ENCODE measurements at regions of chr2 and their contacts with region 1.

Region 1: DNA sequence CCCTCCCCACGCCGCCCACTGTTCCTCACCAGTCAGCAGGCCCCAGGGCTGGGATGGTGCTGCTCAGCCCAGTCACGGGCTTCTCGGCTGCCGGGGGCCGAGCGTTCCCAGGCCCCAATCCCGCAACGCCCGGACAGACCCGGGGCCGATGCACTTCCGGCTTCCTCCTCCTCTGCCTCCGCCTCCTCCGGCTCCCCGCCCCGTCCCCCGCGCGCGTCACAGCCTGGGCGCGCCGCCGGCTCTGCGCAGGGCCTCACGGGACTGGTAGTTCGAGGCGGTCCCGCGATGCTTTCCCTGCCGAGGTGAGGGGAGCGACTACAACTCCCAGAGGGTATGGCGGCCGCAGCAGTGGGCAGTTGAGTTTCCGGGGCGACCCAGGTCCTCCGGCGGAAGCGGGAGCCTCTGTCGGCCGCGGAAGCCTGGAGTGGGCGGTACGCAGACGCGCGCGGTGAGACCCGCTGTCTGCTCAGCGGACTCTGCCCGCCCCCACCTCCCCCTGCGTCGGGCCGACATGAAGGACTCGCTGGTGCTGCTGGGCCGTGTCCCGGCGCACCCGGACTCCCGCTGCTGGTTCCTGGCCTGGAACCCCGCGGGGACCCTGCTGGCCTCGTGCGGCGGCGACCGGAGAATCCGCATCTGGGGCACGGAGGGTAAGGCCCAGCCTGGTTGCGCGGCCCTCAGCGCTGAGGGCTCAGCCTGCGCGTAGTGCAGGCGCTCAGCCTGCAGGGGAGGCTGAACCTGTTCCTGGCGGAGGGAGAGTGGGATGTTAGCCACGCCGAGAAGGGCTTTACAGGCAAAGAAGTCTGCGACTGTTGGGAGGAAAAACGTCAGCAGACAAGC is at the starts of genes CIAO1 and TMEM127:
- DNase-seq: peak; percentile 96 to 100 (median 99)
- H3K4me3 ChIP-seq: peak within 1 kb of the TSS; percentile 75 to 100 (median 94)
- H3K27ac ChIP-seq: peak within 1 kb of the TSS in 58 of 59 donors; percentile 55 to 96 (median 87)
- H3K27me3 ChIP-seq: no peaks in the 10 kb centered on the region
- CTCF ChIP-seq: peak in 48 of 56 donors; percentile 1 to 68 (median 42)
- total RNA-seq, gene CIAO1: 71.3 to 116 (median 96.1) TPM
- total RNA-seq, gene TMEM127: 33.5 to 77.9 (median 59.2) TPM

Region 2: GRCh38 chr2:96024336-96025193 is 241.5 kb before region 1 on chr2:
- intact Hi-C with region 1: loop called in 1 of 2 experiments (anchors 10 kb)
- DNase-seq: peak in 5 of 10 donors; percentile 45 to 72 (median 55)
- H3K4me3 ChIP-seq: no peak overlapping the region
- H3K27ac ChIP-seq: peak overlapping the region in 57 of 59 donors; percentile 25 to 86 (median 69)
- H3K27me3 ChIP-seq: no peaks in the 10 kb centered on the region
- CTCF ChIP-seq: peak in 1 of 56 donors; percentile 5

Region 3: GRCh38 chr2:96145036-96145847 is 120.8 kb before region 1 on chr2 and contains the start of gene DUSP2:
- intact Hi-C with region 1: loop called (anchors 5 to 10 kb)
- DNase-seq: peak in 8 of 10 donors; percentile 43 to 80 (median 59)
- H3K4me3 ChIP-seq: peak within 1 kb of the TSS; percentile 36 to 77 (median 64)
- H3K27ac ChIP-seq: peak within 1 kb of the TSS in 53 of 59 donors; percentile 3 to 84 (median 66)
- H3K27me3 ChIP-seq: no peaks in the 10 kb centered on the region
- CTCF ChIP-seq: peak in 13 of 56 donors; percentile 10 to 29 (median 21)
- total RNA-seq, gene DUSP2: 2.9 to 109 (median 7.5) TPM

Region 4: GRCh38 chr2:96208143-96209010 is 57.7 kb before region 1 on chr2 and contains the start of gene STARD7:
- intact Hi-C with region 1: loop called (anchors 1 to 2 kb)
- DNase-seq: peak; percentile 96 to 99 (median 98)
- H3K4me3 ChIP-seq: peak within 1 kb of the TSS; percentile 58 to 99 (median 94)
- H3K27ac ChIP-seq: peak within 1 kb of the TSS; percentile 70 to 99 (median 95)
- H3K27me3 ChIP-seq: no peaks in the 10 kb centered on the region
- CTCF ChIP-seq: peak in 35 of 56 donors; percentile 4 to 63 (median 37)
- total RNA-seq, gene STARD7: 105 to 205 (median 135) TPM

Region 5: GRCh38 chr2:96305091-96305978 is 39.3 kb after region 1 on chr2 and contains the start of gene SNRNP200:
- intact Hi-C with region 1: loop called (anchors 1 to 5 kb)
- DNase-seq: peak; percentile 83 to 94 (median 90)
- H3K4me3 ChIP-seq: peak within 1 kb of the TSS; percentile 63 to 100 (median 86)
- H3K27ac ChIP-seq: peak within 1 kb of the TSS in 54 of 59 donors; percentile 14 to 94 (median 74)
- H3K27me3 ChIP-seq: no peaks in the 10 kb centered on the region
- CTCF ChIP-seq: peak in 30 of 56 donors; percentile 6 to 51 (median 25)
- total RNA-seq, gene SNRNP200: 76.1 to 117 (median 91.0) TPM